Adrenal gland (tissue), 19 donors: ENCODE measurements at regions of chr20 and their contacts with region 1.

Region 1: DNA sequence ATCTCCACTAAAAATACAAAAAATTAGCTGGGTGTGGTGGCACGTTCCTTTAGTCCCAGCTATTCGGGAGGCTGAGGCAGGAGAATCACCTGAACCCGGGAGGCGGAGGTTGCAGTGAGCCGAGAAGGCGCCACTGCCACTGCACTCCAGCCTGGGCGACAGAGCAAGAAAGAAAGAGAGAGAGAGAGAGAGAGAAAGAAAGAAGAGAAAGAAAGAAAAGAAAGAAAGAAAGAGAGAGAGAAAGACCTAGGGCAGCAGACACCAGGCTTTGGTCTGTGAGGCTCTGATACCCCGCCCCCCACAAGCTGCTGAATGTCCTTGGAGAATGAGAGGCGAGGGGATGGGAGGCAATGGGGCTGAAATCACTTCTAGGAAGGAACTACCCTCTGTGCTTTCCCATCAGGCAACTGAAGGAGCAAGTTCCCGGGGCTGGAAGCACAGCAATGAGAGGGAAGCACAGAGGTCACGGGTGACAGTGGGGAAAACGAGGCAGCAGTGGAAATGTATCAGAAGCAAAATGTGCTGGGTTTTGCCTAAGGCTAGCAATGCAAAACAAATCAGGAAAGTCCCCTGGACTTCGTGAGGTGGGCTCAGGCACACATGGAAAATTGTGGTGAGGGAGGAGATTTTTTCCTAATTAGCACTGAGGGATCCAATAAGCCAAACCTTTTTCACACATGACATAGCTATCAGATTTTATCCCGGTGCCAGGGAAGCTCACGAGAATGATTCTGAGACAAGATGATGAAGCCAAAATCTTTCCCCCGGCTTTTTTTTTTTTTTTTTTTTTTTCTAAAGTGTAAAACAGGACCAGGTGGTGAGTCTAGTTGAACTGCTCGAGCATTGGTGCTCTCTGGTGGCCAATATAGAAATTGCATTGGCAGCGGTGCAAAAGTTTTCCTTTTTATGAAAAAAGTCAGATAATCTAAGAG is 16.9 kb upstream of the ARFGEF2 start:
- DNase-seq: peak; percentile 65 to 88 (median 72)
- H3K4me3 ChIP-seq: no peak overlapping the region
- H3K27ac ChIP-seq: no peak overlapping the region
- H3K4me1 ChIP-seq: peaks cover 0 to 11% of the 10 kb centered on the region in 2 donors
- H3K27me3 ChIP-seq: no peaks in the 10 kb centered on the region
- CTCF ChIP-seq: peak; percentile 71 to 92 (median 90)
- POLR2A ChIP-seq: no peak

Region 2: GRCh38 chr20:48635433-48636310 is 269.0 kb before region 1 on chr20:
- intact Hi-C with region 1: loop called in 1 of 2 experiments (anchors 5 kb)
- DNase-seq: peak; percentile 63 to 83 (median 69)
- H3K4me3 ChIP-seq: no peak overlapping the region
- H3K27ac ChIP-seq: no peak overlapping the region
- H3K4me1 ChIP-seq: peaks cover 0 to 7% of the 10 kb centered on the region in 2 donors
- H3K27me3 ChIP-seq: no peaks in the 10 kb centered on the region
- CTCF ChIP-seq: peak; percentile 73 to 89 (median 81)
- POLR2A ChIP-seq: no peak

Region 3: DNA sequence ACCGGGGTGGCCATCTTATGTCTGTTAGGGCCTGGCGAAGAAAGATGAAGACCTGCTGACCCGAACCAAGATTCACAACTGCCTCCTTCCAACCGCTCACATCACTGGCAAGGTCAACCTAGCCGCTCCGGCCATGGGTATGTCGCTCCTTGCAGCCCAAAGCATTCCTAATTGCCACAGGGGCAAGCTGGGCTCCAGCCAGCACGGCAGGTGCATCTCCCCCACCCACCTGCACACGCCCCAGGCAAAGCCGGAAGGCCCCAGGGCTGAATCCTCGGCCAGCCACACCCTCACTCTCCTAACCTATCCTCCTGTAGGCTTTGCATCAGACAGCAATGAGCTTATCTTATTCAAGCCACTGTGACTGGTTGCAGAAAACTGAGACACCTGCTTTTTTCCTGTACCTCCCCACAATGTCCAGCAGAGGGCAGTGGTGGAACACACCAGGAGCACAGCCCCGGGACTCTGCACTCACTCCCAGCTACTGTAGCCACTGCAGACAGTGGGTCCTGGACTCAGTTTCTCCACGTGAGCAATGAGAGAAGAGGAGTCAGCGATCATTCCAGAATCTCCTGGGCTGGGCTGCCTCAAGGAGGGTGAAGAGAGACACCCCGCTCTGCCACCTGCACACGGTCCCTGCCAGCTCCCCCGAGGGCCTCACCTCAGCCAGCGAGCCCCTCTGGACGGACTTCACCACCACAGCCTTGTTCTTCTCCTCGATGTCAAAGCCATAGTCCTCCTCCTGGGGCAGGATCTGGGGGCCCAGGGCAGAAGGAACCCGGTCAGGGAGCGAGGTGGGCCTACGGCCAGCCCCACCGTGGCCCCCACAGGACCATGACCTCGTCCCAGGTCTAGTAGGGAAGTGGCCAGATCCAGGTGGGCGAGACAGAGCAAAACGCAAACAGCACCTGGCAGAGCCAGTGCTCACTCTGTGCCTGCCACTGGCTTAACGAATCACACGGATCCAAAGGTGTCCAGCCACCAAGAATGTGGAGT is 246.9 kb before region 1 on chr20:
- intact Hi-C with region 1: loop called (anchors 2 kb)
- DNase-seq: peak; percentile 62 to 88 (median 78)
- H3K4me3 ChIP-seq: no peak overlapping the region
- H3K27ac ChIP-seq: no peak overlapping the region
- H3K4me1 ChIP-seq: peaks cover 10 to 12% of the 10 kb centered on the region in 2 donors
- H3K27me3 ChIP-seq: no peaks in the 10 kb centered on the region
- CTCF ChIP-seq: peak; percentile 86 to 96 (median 95)
- POLR2A ChIP-seq: no peak

Region 4: DNA sequence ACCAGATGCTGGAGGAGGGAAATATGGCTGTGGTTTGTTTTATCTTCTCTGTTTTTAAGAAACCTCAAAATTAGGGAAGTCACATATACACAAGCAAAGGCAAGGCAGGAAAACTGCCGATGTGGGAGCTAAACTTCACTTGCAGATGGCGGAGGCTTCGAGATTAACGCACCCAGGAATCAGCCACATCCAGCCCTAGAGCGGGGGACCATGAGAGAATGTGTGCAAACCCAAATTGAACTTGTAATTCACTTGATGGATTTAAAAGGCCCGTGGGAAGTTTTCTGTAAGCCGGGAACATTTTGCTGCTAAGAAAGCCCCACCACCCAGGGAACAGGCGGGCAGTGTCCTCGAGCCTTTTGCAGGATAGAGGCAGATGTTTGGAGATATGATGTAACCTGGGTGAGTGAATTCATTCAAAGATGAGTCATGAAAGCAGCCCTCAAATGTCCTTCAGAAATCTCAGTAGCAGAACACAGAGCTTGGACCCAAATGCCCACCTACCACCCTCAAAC is 116.7 kb before region 1 on chr20:
- intact Hi-C with region 1: no loop called
- DNase-seq: peak in 4 of 7 donors; percentile 42 to 61 (median 57)
- H3K4me3 ChIP-seq: no peak overlapping the region
- H3K27ac ChIP-seq: peak overlapping the region in 1 of 5 donors; percentile 73
- H3K4me1 ChIP-seq: peaks cover 6 to 29% of the 10 kb centered on the region in 2 donors
- H3K27me3 ChIP-seq: no peaks in the 10 kb centered on the region
- CTCF ChIP-seq: no peak
- POLR2A ChIP-seq: no peak

Region 5: GRCh38 chr20:48853591-48854443 is 50.8 kb before region 1 on chr20:
- intact Hi-C with region 1: no loop called
- DNase-seq: peak; percentile 37 to 79 (median 68)
- H3K4me3 ChIP-seq: no peak overlapping the region
- H3K27ac ChIP-seq: peak overlapping the region in 1 of 5 donors; percentile 3
- H3K4me1 ChIP-seq: peaks cover 0 to 4% of the 10 kb centered on the region in 2 donors
- H3K27me3 ChIP-seq: no peaks in the 10 kb centered on the region
- CTCF ChIP-seq: no peak
- POLR2A ChIP-seq: no peak

Region 6: DNA sequence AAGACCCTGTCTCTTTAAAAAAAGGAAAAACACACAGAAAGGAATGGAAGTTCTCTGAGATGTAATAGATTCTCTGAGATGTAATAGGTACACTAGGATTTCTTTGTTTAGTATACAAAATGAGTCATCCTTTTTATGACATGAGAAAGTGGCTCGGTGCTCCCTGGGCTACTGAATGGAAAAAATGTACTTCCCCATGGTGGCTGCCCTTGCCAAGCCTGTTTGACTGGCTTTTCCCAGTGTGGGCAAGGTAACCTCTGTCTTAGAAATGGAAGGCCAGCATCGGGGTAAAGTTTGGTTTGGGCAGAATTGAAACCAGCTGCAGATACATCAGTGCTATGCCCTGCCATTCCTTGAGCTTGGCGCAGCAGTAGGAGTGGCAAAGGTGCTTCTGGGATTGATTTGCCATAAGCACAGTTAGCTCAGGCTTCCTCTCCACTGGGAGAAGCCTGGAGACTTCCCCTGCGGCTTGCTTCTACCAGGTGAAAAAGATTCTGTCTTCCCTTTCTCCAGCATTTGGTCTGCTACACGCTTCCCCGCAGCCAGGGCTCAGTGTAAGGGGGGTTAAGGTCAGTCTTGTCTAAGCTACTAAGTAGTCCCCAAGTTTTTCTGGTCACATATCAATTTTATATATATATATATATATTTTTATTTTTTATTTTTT is 41.4 kb after region 1 on chr20:
- intact Hi-C with region 1: no loop called
- DNase-seq: peak; percentile 43 to 83 (median 69)
- H3K4me3 ChIP-seq: no peak overlapping the region
- H3K27ac ChIP-seq: peak overlapping the region in 3 of 5 donors; percentile 66 to 81 (median 70)
- H3K4me1 ChIP-seq: peaks cover 3 to 10% of the 10 kb centered on the region in 2 donors
- H3K27me3 ChIP-seq: no peaks in the 10 kb centered on the region
- CTCF ChIP-seq: no peak
- POLR2A ChIP-seq: no peak